ENCODE measurements at regions of chr10 and their contacts with region 1.

Region 1: DNA sequence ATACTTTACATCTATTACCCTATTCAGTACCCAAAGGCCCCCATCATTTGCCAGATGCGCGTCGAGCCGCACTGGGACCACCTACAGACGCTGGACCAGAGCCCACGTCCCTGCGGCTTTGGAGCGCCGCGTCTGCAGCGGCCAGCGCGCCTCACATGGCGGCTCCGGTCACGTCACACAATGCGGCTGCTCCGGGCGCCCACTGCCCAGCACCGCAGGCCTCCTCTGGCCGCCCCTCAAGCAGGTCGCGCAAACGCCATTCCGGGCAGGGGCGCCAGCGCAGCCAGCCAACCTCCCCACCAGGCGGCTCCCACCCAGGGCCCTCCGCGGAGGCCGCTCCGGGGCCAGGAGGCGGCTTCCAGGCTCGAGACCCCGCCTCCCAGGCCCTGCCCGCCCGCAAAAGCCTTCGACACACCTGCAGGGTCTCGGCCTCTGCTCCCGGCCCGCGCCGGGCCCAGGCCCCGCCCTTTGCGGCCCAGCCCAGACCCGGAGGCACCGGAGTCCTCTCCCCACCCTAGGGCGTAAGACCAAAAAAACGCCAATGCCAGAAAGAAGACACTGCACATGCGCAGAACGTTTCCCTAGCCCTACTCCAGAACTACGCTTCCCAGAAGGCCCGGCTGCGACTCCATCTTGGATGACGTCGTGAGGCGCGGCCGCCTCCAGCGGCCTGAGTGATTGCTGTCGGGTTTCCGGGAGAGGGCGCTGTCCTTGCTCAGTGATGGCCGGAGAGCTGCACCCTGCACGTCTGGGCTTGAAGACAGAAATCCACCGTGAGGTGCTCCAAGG is at the start of gene ZNF25:
- DNase-seq: peak; percentile 96 to 99 (median 98)
- H3K4me3 ChIP-seq: peak within 1 kb of the TSS; percentile 91
- H3K4me3 Mint-ChIP-seq: peak within 1 kb of the TSS; percentile 88 to 99 (median 96)
- H3K27ac ChIP-seq: peak within 1 kb of the TSS; percentile 88
- H3K27ac Mint-ChIP-seq: peak within 1 kb of the TSS; percentile 85 to 99 (median 98)
- H3K4me1 ChIP-seq: peaks cover 20% of the 10 kb centered on the region
- H3K4me1 Mint-ChIP-seq: peaks cover 28 to 31% (median 30%) of the 10 kb centered on the region in 3 donors
- H3K27me3 ChIP-seq: no peaks in the 10 kb centered on the region
- H3K27me3 Mint-ChIP-seq: no peaks in the 10 kb centered on the region
- total RNA-seq, gene ZNF25: 4.6 to 5.9 TPM

Region 2: GRCh38 chr10:37857287-37858211 is 118.7 kb before region 1 on chr10 and contains the start of gene ZNF248:
- CTCF ChIA-PET with region 1: interaction called, 7 read pairs
- POLR2A ChIA-PET with region 1: interaction called, 10 read pairs
- DNase-seq: peak; percentile 91 to 96 (median 93)
- H3K4me3 ChIP-seq: peak within 1 kb of the TSS; percentile 93
- H3K4me3 Mint-ChIP-seq: peak within 1 kb of the TSS; percentile 86 to 98 (median 96)
- H3K27ac ChIP-seq: peak within 1 kb of the TSS; percentile 98
- H3K27ac Mint-ChIP-seq: peak within 1 kb of the TSS; percentile 93 to 100 (median 96)
- H3K4me1 ChIP-seq: peaks cover 19% of the 10 kb centered on the region
- H3K4me1 Mint-ChIP-seq: peaks cover 42 to 52% (median 48%) of the 10 kb centered on the region in 3 donors
- H3K27me3 ChIP-seq: no peaks in the 10 kb centered on the region
- H3K27me3 Mint-ChIP-seq: peaks cover 0 to 3% of the 10 kb centered on the region in 2 donors
- total RNA-seq, gene ZNF248: 5.8 to 6.8 TPM

Region 3: GRCh38 chr10:38010119-38010903 is 34.0 kb after region 1 on chr10 and contains the start of gene ZNF33A:
- CTCF ChIA-PET with region 1: interaction called, 9 read pairs
- POLR2A ChIA-PET with region 1: interaction called, 16 read pairs
- DNase-seq: peak; percentile 88 to 96 (median 94)
- H3K4me3 ChIP-seq: peak within 1 kb of the TSS; percentile 92
- H3K4me3 Mint-ChIP-seq: peak within 1 kb of the TSS; percentile 86 to 98 (median 94)
- H3K27ac ChIP-seq: peak within 1 kb of the TSS; percentile 99
- H3K27ac Mint-ChIP-seq: peak within 1 kb of the TSS; percentile 99 to 100 (median 100)
- H3K4me1 ChIP-seq: peaks cover 16% of the 10 kb centered on the region
- H3K4me1 Mint-ChIP-seq: peaks cover 35 to 52% (median 48%) of the 10 kb centered on the region in 3 donors
- H3K27me3 ChIP-seq: no peaks in the 10 kb centered on the region
- H3K27me3 Mint-ChIP-seq: no peaks in the 10 kb centered on the region
- total RNA-seq, gene ZNF33A: 22.9 to 25.7 TPM

Region 4: GRCh38 chr10:38047666-38048065 is 71.4 kb after region 1 on chr10:
- CTCF ChIA-PET with region 1: no interaction called
- POLR2A ChIA-PET with region 1: no interaction called
- DNase-seq: no peak
- H3K4me3 ChIP-seq: no peak overlapping the region
- H3K4me3 Mint-ChIP-seq: no peak overlapping the region
- H3K27ac ChIP-seq: no peak overlapping the region
- H3K27ac Mint-ChIP-seq: peak overlapping the region in 1 of 8 donors; percentile 38
- H3K4me1 ChIP-seq: peaks cover 6% of the 10 kb centered on the region
- H3K4me1 Mint-ChIP-seq: peaks cover 22 to 29% (median 27%) of the 10 kb centered on the region in 3 donors
- H3K27me3 ChIP-seq: no peaks in the 10 kb centered on the region
- H3K27me3 Mint-ChIP-seq: no peaks in the 10 kb centered on the region

Region 5: GRCh38 chr10:38094158-38094920 is 118.1 kb after region 1 on chr10 and contains the start of gene ZNF37A:
- CTCF ChIA-PET with region 1: interaction called, 20 read pairs
- POLR2A ChIA-PET with region 1: interaction called, 6 read pairs
- DNase-seq: peak; percentile 78 to 93 (median 85)
- H3K4me3 ChIP-seq: peak within 1 kb of the TSS; percentile 86
- H3K4me3 Mint-ChIP-seq: peak within 1 kb of the TSS; percentile 89 to 94 (median 92)
- H3K27ac ChIP-seq: peak within 1 kb of the TSS; percentile 95
- H3K27ac Mint-ChIP-seq: peak within 1 kb of the TSS; percentile 69 to 99 (median 97)
- H3K4me1 ChIP-seq: peaks cover 17% of the 10 kb centered on the region
- H3K4me1 Mint-ChIP-seq: peaks cover 30 to 54% (median 45%) of the 10 kb centered on the region in 3 donors
- H3K27me3 ChIP-seq: no peaks in the 10 kb centered on the region
- H3K27me3 Mint-ChIP-seq: no peaks in the 10 kb centered on the region
- total RNA-seq, gene ZNF37A: 19.0 to 19.6 TPM